Activated B cell treated with CpG ODN at 0.5 μM for 24 hours (primary cell): ENCODE measurements at regions of chr7 and their contacts with region 1.

Region 1: GRCh38 chr7:30348083-30348560 is 63.7 kb downstream of the ZNRF2 start:
- DNase-seq: no peak
- ATAC-seq: peak; percentile 83
- H3K4me3 Mint-ChIP-seq: peak overlapping the region; percentile 32
- H3K27ac Mint-ChIP-seq: peak overlapping the region; percentile 86
- H3K4me1 Mint-ChIP-seq: peaks cover 65% of the 10 kb centered on the region
- H3K27me3 Mint-ChIP-seq: no peaks in the 10 kb centered on the region
- CTCF ChIP-seq: no peak

Region 2: DNA sequence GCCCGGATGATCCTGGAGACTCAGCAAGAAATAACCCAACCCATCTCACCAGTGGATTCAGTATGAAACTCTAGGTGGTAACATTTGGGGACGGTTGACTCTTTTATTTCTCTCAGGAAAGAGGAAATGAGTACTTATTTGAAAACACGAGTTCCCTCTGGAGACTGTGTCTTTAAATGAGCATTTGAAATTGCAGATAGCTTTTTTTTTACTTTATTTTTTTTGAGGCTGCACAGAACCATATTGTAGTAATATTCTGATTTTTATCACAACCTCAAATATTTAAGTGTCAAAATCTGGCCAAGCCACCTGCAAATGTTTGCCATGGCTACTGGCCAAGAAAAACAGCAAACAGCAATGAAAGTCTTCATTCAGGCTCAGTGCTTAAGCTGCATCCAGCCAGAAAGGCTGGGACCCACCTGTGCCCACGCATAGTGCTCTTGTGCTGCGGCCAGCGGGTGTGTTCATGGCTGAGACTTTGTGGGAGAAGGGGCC is 1775.0 kb before region 1 on chr7:
- CTCF ChIA-PET with region 1: no interaction called
- POLR2A ChIA-PET with region 1: no interaction called
- intact Hi-C with region 1: no loop called
- DNase-seq: no peak
- ATAC-seq: peak; percentile 32
- H3K4me3 Mint-ChIP-seq: no peak overlapping the region
- H3K27ac Mint-ChIP-seq: no peak overlapping the region
- H3K4me1 Mint-ChIP-seq: peaks cover 28% of the 10 kb centered on the region
- H3K27me3 Mint-ChIP-seq: peaks cover 17% of the 10 kb centered on the region
- CTCF ChIP-seq: no peak

Region 3: GRCh38 chr7:29976673-29977415 is 371.3 kb before region 1 on chr7:
- CTCF ChIA-PET with region 1: no interaction called
- POLR2A ChIA-PET with region 1: no interaction called
- intact Hi-C with region 1: no loop called
- DNase-seq: no peak
- ATAC-seq: no peak
- H3K4me3 Mint-ChIP-seq: no peak overlapping the region
- H3K27ac Mint-ChIP-seq: no peak overlapping the region
- H3K4me1 Mint-ChIP-seq: peaks cover 17% of the 10 kb centered on the region
- H3K27me3 Mint-ChIP-seq: no peaks in the 10 kb centered on the region
- CTCF ChIP-seq: no peak

Region 4: DNA sequence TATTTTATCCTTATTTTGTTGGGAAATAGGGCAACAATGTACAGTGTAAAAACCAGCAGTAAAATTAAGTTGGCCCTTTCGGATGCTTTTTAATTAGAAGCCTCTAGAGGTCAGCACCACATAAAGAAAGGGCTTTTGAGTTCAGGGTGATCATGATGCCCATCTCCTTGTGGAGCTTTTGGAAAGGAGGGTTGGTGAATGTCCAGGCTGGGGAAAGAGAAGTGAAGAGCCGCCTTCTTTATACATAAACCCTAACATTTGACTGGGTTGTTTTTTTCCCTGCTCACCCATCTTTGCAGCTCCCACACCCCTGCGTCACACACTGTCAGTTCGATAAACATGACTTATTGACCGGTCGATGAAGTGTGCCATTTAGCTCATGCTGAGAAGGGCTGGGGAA is 183.6 kb before region 1 on chr7:
- CTCF ChIA-PET with region 1: interaction called, 27 read pairs
- POLR2A ChIA-PET with region 1: no interaction called
- intact Hi-C with region 1: loop called (anchors 1 kb)
- DNase-seq: no peak
- ATAC-seq: peak; percentile 49
- H3K4me3 Mint-ChIP-seq: no peak overlapping the region
- H3K27ac Mint-ChIP-seq: peak overlapping the region; percentile 38
- H3K4me1 Mint-ChIP-seq: peaks cover 39% of the 10 kb centered on the region
- H3K27me3 Mint-ChIP-seq: no peaks in the 10 kb centered on the region
- CTCF ChIP-seq: no peak

Region 5: DNA sequence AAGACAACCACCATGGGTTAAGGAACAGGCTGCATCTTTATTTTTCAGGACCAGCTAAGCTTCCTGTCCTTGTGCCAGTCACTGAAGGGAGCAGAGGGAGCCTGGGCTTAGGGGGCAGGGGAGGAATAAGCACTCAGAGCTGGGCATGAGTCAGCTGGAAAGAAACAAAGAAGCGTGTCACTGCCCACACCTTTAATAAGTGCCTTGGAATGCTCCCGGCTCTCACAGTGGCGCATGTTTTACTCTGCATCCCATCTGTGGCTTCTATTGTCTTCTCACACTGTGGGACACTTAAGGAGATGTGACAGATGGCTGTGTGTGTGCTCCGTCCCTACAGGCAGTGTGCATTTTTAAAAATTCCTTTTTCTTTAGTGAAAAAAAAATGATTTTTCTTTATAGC is 141.6 kb before region 1 on chr7:
- CTCF ChIA-PET with region 1: no interaction called
- POLR2A ChIA-PET with region 1: no interaction called
- intact Hi-C with region 1: no loop called
- DNase-seq: no peak
- ATAC-seq: no peak
- H3K4me3 Mint-ChIP-seq: no peak overlapping the region
- H3K27ac Mint-ChIP-seq: no peak overlapping the region
- H3K4me1 Mint-ChIP-seq: peaks cover 12% of the 10 kb centered on the region
- H3K27me3 Mint-ChIP-seq: no peaks in the 10 kb centered on the region
- CTCF ChIP-seq: no peak

Region 6: DNA sequence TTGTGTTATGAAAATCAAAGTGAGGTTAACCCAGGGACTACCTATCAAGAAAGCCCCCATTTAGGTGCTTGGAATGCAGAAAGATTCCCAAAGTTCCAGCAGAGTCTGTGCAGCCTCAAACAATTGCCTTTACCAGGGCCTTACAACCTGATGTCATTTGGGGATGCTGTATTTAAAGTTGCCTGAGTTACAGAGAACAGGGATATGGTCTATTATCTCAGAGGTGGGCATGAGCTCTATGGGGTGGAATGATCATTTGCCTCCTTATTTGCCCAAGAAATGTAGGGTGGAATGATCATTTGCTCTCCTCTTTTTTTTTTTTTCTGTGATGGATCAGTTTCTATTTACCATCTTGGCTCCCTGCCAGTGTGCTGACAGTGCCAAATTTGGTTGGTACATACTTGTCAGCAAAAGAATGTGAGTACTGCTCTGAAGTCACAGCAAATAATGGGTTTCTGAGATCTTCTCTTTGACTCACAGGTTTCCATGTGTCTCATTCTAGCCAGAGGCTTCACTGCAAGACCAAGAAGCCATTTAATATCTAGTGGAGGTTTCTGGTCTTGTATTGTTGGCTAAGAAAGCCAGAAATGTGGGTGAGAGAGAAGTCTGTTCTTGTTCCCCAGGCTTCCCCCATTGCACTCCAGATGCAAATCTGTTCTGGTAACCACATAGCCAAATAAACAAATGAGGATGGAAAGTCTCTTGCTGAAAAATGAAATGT is 109.2 kb before region 1 on chr7:
- CTCF ChIA-PET with region 1: no interaction called
- POLR2A ChIA-PET with region 1: interaction called, 6 read pairs
- intact Hi-C with region 1: loop called (anchors 1 kb)
- DNase-seq: no peak
- ATAC-seq: peak; percentile 69
- H3K4me3 Mint-ChIP-seq: peak overlapping the region; percentile 58
- H3K27ac Mint-ChIP-seq: peak overlapping the region; percentile 88
- H3K4me1 Mint-ChIP-seq: peaks cover 48% of the 10 kb centered on the region
- H3K27me3 Mint-ChIP-seq: no peaks in the 10 kb centered on the region
- CTCF ChIP-seq: no peak

Region 7: GRCh38 chr7:30308389-30308788 is 39.7 kb before region 1 on chr7:
- CTCF ChIA-PET with region 1: no interaction called
- POLR2A ChIA-PET with region 1: no interaction called
- intact Hi-C with region 1: loop called (anchors 5 kb)
- DNase-seq: no peak
- ATAC-seq: peak; percentile 65
- H3K4me3 Mint-ChIP-seq: no peak overlapping the region
- H3K27ac Mint-ChIP-seq: no peak overlapping the region
- H3K4me1 Mint-ChIP-seq: peaks cover 80% of the 10 kb centered on the region
- H3K27me3 Mint-ChIP-seq: no peaks in the 10 kb centered on the region
- CTCF ChIP-seq: no peak

Region 8: DNA sequence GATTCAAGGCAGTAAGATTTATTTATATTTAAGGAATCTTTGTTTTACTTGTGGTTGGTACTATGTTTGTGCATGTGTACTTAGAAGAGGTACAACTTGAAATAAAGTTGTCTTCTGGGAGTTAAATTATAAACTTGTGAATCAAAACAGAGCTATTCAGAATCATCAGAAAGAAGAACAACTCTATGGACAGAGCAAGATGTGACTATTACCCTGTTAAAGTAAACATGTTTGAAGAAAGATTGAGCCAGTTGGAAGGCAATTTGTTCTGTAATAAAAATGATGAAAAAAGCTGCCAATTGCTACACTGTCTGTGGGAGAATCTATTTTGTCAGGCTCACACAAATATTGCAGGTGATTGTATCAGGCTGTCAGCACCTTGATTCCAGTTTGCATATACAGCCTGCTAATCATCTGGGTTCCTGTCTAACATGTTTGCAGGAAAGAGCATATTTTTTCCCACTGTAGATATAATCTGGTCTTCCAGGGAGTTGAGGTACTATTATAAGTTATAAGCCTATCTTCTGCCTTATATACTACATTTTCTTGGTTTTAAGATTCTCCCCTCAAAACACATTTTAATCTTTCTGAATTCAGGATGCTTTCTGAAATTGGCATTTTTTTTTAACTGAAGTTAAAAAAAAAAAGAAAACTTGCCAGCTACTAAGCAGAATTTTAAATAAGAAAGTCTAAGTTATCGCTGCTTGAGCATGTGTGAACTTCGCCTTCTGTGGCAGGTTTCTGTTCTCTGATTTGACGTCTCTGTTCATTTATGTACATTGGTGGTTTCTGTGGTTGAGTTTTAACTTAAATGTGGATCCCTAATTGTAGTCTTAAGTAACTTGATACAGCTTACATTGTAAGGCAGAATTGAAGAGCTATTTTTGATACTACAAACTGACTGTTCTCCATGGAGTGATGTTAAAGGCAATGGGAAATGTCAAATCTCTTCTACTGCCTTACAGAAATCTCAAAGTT is 17.7 kb before region 1 on chr7:
- CTCF ChIA-PET with region 1: interaction called, 3 read pairs
- POLR2A ChIA-PET with region 1: interaction called, 8 read pairs
- intact Hi-C with region 1: loop called (anchors 1 kb)
- DNase-seq: no peak
- ATAC-seq: peak; percentile 91
- H3K4me3 Mint-ChIP-seq: peak overlapping the region; percentile 39
- H3K27ac Mint-ChIP-seq: peak overlapping the region; percentile 33
- H3K4me1 Mint-ChIP-seq: peaks cover 74% of the 10 kb centered on the region
- H3K27me3 Mint-ChIP-seq: no peaks in the 10 kb centered on the region
- CTCF ChIP-seq: no peak

Region 9: GRCh38 chr7:30469303-30469702 is 121.2 kb after region 1 on chr7:
- CTCF ChIA-PET with region 1: no interaction called
- POLR2A ChIA-PET with region 1: interaction called, 4 read pairs
- intact Hi-C with region 1: loop called (anchors 5 kb)
- DNase-seq: no peak
- ATAC-seq: no peak
- H3K4me3 Mint-ChIP-seq: no peak overlapping the region
- H3K27ac Mint-ChIP-seq: no peak overlapping the region
- H3K4me1 Mint-ChIP-seq: peaks cover 93% of the 10 kb centered on the region
- H3K27me3 Mint-ChIP-seq: no peaks in the 10 kb centered on the region
- CTCF ChIP-seq: no peak